ACHN (cell line): ENCODE measurements at regions of chr4 and their contacts with region 1.

Region 1: DNA sequence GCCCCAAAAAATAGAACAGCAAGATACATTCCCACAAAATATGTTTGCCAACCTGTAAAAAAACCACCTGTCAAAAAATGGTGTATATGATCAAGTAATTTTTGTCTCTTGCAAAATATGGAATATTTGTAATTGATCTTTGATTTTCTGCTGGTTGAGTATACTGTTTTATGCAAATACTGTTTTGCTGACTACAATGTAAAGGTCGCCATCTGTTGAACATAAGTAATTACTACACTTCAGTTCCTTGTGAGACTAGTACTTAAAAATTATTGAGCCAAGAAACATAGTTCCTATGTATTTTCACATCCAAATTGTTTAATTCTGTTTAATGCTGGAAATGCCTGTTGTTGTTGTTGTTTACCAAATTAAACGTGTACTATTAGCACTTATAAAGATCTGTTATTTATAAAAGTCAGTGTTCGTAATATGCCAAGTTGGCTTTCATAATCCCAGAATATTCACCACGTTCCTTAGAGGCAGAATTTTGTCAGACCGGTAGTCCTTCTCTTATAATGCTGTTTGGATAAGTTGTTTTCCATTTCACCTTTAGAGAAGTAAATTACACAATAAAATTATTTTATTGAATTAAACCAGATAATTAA is 144.2 kb downstream of the PDLIM5 start:
- DNase-seq: peak; percentile 42

Region 2: GRCh38 chr4:94406668-94407437 is 189.1 kb before region 1 on chr4:
- in situ Hi-C with region 1: loop called (anchors 25 kb)
- DNase-seq: peak; percentile 76

Region 3: GRCh38 chr4:95181246-95181995 is 585.4 kb after region 1 on chr4:
- in situ Hi-C with region 1: no loop called
- DNase-seq: no peak